ENCODE measurements at regions of chr3 and their contacts with region 1.

Region 1: GRCh38 chr3:168847291-168847883 is 751.7 kb upstream of the GOLIM4 start:
- DNase-seq: no peak
- H3K4me3 ChIP-seq: no peak overlapping the region
- H3K27me3 ChIP-seq: peaks cover 2% of the 10 kb centered on the region; the same call in 1 of the 2 replicates
- CTCF ChIP-seq: peak; percentile 63

Region 2: GRCh38 chr3:168212664-168213285 is 634.6 kb before region 1 on chr3:
- CTCF ChIA-PET with region 1: interaction called, 61 read pairs
- POLR2A ChIA-PET with region 1: no interaction called
- DNase-seq: no peak
- H3K4me3 ChIP-seq: no peak overlapping the region
- H3K27me3 ChIP-seq: no peaks in the 10 kb centered on the region
- CTCF ChIP-seq: no peak

Region 3: DNA sequence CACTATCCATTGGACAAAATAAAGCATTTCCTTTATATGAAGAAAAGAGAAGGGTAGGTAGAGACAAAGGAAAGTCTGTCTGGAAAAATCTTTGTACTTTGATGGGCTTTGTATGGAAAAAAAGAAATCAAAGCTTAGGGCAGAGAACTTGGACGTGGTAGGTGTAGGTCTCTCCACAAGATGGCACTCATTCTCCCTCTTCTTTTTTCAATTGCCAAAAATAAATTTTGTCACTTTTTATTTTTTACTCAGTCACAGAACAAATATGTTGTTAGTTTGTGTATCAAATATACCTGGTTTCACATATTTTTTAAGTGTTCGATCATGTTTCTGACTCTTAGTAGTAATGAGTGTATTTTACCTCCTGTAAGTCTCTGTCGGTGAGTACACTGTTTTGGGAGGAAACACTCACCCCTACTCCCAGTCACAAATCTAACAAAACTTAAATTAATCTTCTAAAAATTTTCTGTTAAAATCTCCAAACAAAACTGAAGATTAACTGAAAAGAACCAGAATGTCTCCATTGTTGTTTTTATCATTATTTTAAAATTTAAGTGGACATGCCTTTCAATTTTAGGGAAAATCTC is 335.9 kb before region 1 on chr3:
- CTCF ChIA-PET with region 1: interaction called, 17 read pairs
- POLR2A ChIA-PET with region 1: no interaction called
- DNase-seq: no peak
- H3K4me3 ChIP-seq: no peak overlapping the region
- H3K27me3 ChIP-seq: no peaks in the 10 kb centered on the region
- CTCF ChIP-seq: peak; percentile 56

Region 4: DNA sequence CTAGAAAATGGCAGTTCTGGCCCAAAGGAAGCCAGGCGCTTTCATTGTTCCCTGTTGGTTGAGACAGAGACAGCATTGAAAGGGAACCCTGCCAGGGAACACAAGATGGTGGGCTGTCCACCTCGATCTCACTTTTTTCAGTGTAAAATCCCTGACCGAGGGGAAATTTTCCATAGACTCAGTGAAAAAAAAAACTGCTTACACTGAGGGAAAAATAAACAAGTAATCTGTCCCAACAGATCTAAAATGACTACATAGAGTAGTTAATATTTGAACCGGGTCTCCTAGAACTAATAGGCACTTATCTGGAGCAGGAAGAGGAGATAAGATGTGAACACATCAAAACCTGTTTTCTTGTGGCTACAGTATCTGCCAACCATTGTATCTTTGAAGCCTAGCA is 11.8 kb after region 1 on chr3:
- CTCF ChIA-PET with region 1: interaction called, 28 read pairs
- POLR2A ChIA-PET with region 1: no interaction called
- DNase-seq: no peak
- H3K4me3 ChIP-seq: no peak overlapping the region
- H3K27me3 ChIP-seq: peaks cover 2% of the 10 kb centered on the region; the same call in 1 of the 2 replicates
- CTCF ChIP-seq: no peak

Region 5: GRCh38 chr3:169060042-169060441 is 212.7 kb after region 1 on chr3:
- CTCF ChIA-PET with region 1: no interaction called
- POLR2A ChIA-PET with region 1: no interaction called
- DNase-seq: no peak
- H3K4me3 ChIP-seq: no peak overlapping the region
- H3K27me3 ChIP-seq: no peaks in the 10 kb centered on the region
- CTCF ChIP-seq: peak; percentile 21; the same call in 1 of the 2 replicates

Measured in BJ (cell line).